Activated CD8-positive, alpha-beta T cell treated with anti-CD3 and anti-CD28 coated beads for 36 hours (primary cell): ENCODE measurements at regions of chr1 and their contacts with region 1.

Region 1: GRCh38 chr1:169586395-169587255 is at the start of gene F5:
- DNase-seq: peak; percentile 90
- ATAC-seq: peak; percentile 90
- H3K4me3 Mint-ChIP-seq: peak within 1 kb of the TSS; percentile 91
- H3K27ac Mint-ChIP-seq: peak within 1 kb of the TSS; percentile 91
- H3K4me1 Mint-ChIP-seq: peaks cover 71% of the 10 kb centered on the region
- H3K27me3 Mint-ChIP-seq: no peaks in the 10 kb centered on the region
- CTCF ChIP-seq: peak; percentile 66
- total RNA-seq, gene F5: 20.7 to 23.3 TPM

Region 2: DNA sequence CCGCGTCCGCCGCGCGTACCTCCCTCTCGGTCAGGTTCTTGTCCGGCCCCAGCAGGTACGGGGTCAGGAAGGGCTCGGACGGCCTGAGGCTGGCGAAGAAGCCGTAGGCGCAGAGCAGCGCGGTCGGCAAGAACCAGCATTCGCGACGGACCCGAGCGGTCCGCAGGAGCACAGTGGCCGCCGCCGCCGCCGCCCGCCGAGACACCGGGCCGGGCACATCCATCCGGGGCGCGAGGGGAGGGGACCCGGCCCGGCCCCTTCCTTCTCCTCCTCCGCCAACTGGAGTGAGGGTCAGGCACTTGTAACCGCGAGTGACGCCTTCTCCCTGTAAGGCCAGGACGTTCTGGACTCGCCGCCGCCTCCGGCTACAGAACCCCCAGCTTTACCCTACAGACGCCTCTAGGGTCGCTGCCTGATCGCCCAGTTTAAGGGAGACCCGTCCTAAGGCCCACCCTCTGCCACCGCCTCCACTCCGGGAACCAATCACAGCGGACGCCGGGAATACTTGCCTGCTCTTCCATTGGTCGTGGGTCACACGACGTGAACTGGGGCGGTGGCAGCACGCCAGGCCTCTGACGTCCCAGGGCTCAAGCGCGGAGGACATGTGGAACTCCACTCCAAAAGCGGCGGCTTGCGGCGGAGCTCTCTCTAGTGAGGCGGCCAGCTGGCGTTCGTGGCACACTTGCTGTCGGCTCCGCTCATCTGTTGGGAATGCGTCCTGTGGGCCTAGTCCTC is 100.9 kb before region 1 on chr1 and contains the start of gene SLC19A2:
- CTCF ChIA-PET with region 1: no interaction called
- POLR2A ChIA-PET with region 1: no interaction called
- intact Hi-C with region 1: loop called (anchors 5 kb)
- DNase-seq: peak; percentile 96
- ATAC-seq: peak; percentile 99
- H3K4me3 Mint-ChIP-seq: peak within 1 kb of the TSS; percentile 87
- H3K27ac Mint-ChIP-seq: peak within 1 kb of the TSS; percentile 92
- H3K4me1 Mint-ChIP-seq: peaks cover 52% of the 10 kb centered on the region
- H3K27me3 Mint-ChIP-seq: no peaks in the 10 kb centered on the region
- CTCF ChIP-seq: peak; percentile 11
- total RNA-seq, gene SLC19A2: 5.7 to 6.4 TPM

Region 3: GRCh38 chr1:169529068-169529696 is 57.4 kb before region 1 on chr1:
- CTCF ChIA-PET with region 1: no interaction called
- POLR2A ChIA-PET with region 1: no interaction called
- intact Hi-C with region 1: no loop called
- DNase-seq: no peak
- ATAC-seq: no peak
- H3K4me3 Mint-ChIP-seq: no peak overlapping the region
- H3K27ac Mint-ChIP-seq: no peak overlapping the region
- H3K4me1 Mint-ChIP-seq: peaks cover 9% of the 10 kb centered on the region
- H3K27me3 Mint-ChIP-seq: no peaks in the 10 kb centered on the region
- CTCF ChIP-seq: no peak

Region 4: GRCh38 chr1:169576241-169576934 is 10.2 kb before region 1 on chr1:
- CTCF ChIA-PET with region 1: interaction called, 10 read pairs
- POLR2A ChIA-PET with region 1: no interaction called
- intact Hi-C with region 1: no loop called
- DNase-seq: no peak
- ATAC-seq: no peak
- H3K4me3 Mint-ChIP-seq: no peak overlapping the region
- H3K27ac Mint-ChIP-seq: no peak overlapping the region
- H3K4me1 Mint-ChIP-seq: peaks cover 2% of the 10 kb centered on the region
- H3K27me3 Mint-ChIP-seq: no peaks in the 10 kb centered on the region
- CTCF ChIP-seq: no peak

Region 5: DNA sequence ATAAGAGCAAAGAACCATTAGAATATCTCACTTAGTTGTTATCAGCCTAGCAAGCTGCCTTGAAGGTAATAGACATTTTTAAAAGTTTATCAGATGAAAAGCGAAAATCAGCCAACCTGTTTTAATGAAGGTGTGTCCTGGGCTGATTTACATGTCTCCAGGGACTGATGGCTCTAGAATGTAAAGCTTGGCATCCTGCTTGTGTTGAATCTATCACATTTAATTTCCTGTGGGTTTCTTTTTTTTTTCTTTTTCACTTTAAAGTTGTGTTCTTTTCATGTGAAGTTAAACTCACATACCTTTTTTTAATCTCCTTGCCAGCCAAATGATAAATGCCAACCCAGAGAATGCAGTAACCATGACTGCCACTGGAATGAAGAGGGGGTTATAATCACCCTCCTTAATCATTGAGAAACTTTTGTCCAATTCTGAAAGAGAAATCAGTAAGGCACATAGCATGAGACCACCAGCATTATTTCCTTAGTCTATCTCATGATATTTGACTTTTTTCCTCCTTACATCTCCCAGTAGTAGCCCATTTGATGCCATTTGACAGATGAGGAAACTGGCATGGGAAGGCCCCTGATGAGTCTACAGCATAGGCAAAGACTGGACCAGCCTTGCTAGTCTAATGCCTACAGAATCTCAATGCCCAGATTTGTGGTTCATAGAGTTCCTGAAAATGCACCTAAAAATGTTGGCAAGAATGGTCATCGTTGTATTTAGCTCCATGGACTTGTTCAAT is 114.8 kb after region 1 on chr1:
- CTCF ChIA-PET with region 1: interaction called, 11 read pairs
- POLR2A ChIA-PET with region 1: interaction called, 8 read pairs
- intact Hi-C with region 1: loop called (anchors 5 kb)
- DNase-seq: no peak
- ATAC-seq: peak; percentile 12
- H3K4me3 Mint-ChIP-seq: peak overlapping the region; percentile 3
- H3K27ac Mint-ChIP-seq: peak overlapping the region; percentile 82
- H3K4me1 Mint-ChIP-seq: peaks cover 93% of the 10 kb centered on the region
- H3K27me3 Mint-ChIP-seq: no peaks in the 10 kb centered on the region
- CTCF ChIP-seq: no peak

Region 6: GRCh38 chr1:169765580-169766331 is 179.1 kb after region 1 on chr1:
- CTCF ChIA-PET with region 1: no interaction called
- POLR2A ChIA-PET with region 1: no interaction called
- intact Hi-C with region 1: no loop called
- DNase-seq: no peak
- ATAC-seq: no peak
- H3K4me3 Mint-ChIP-seq: no peak overlapping the region
- H3K27ac Mint-ChIP-seq: no peak overlapping the region
- H3K4me1 Mint-ChIP-seq: no peaks in the 10 kb centered on the region
- H3K27me3 Mint-ChIP-seq: peaks cover 2% of the 10 kb centered on the region
- CTCF ChIP-seq: no peak

Region 7: GRCh38 chr1:169809370-169810095 is 222.9 kb after region 1 on chr1:
- CTCF ChIA-PET with region 1: interaction called, 10 read pairs
- POLR2A ChIA-PET with region 1: no interaction called
- intact Hi-C with region 1: no loop called
- DNase-seq: peak; percentile 31
- ATAC-seq: no peak
- H3K4me3 Mint-ChIP-seq: no peak overlapping the region
- H3K27ac Mint-ChIP-seq: no peak overlapping the region
- H3K4me1 Mint-ChIP-seq: no peaks in the 10 kb centered on the region
- H3K27me3 Mint-ChIP-seq: no peaks in the 10 kb centered on the region
- CTCF ChIP-seq: peak; percentile 68